ENCODE measurements at regions of chr19 and their contacts with region 1.

Region 1: GRCh38 chr19:51501594-51502263 is at the start of gene SIGLEC12:
- DNase-seq: peak; percentile 48 to 74 (median 67)
- H3K4me3 ChIP-seq: peak within 1 kb of the TSS in 4 of 7 experiments; percentile 13 to 44 (median 42)
- H3K27ac ChIP-seq: no peak within 1 kb of the TSS
- H3K4me1 ChIP-seq: peaks cover 0 to 37% (median 34%) of the 10 kb centered on the region in 4 experiments
- H3K27me3 ChIP-seq: no peaks in the 10 kb centered on the region

Region 2: GRCh38 chr19:51514866-51515481 is 13.2 kb after region 1 on chr19:
- CTCF ChIA-PET with region 1: interaction called, 45 read pairs
- POLR2A ChIA-PET with region 1: no interaction called
- DNase-seq: peak; percentile 62 to 79 (median 72)
- H3K4me3 ChIP-seq: no peak overlapping the region
- H3K27ac ChIP-seq: no peak overlapping the region
- H3K4me1 ChIP-seq: peaks cover 0 to 2% (median 0%) of the 10 kb centered on the region in 4 experiments
- H3K27me3 ChIP-seq: peaks cover 0 to 12% (median 3%) of the 10 kb centered on the region in 5 experiments